Dorsolateral prefrontal cortex (tissue), 120 donors: ENCODE measurements at regions of chr16 and their contacts with region 1.

Region 1: DNA sequence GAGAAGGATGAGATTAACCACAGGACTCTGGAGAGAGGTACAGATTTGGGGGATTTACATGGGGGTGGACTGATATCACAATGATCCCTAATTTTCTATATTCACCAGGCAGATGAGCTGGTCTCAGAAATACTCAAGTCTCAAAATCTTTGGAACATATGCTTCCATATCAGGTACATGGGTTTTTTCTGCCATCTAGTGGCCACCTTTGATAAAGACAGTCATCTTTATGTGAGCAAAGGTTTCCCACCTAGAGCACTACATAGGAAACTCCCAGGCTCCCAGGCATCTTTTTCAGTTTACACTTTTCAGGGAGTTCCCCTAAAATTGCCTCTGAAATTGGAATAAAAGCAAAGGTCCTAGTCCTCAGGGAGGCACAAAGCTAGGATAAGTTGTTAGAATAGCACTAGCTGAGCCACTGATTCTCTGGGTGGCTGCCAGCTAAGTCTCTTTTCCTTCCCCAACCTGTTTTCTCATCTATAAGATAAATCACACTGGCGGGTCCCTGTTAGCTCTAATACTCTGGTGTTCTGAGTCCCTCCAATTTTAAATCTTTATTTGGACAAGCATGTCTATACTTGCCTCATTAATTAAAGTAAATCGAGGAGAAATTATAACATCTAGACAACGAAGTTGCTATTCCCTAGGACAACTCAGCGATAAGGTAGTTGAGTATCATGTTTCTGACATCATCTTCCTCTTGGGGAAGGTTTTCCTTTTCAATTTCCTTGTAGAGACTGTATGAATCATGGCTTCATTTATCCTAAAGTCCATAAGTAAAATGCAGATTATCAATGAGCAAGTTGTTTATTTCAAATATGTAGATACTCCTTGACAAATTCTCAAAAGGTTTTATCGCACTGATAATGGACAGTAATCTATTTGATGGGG is 19.0 kb upstream of the MON1B start:
- DNase-seq: peak in 1 of 10 donors; percentile 46
- H3K4me3 ChIP-seq: no peak overlapping the region
- H3K27ac ChIP-seq: no peak overlapping the region
- H3K27me3 ChIP-seq: peaks cover 0 to 13% (median 0%) of the 10 kb centered on the region in 45 donors
- CTCF ChIP-seq: peak; percentile 66 to 93 (median 82)

Region 2: GRCh38 chr16:75789237-75789636 is 1382.8 kb before region 1 on chr16:
- intact Hi-C with region 1: loop called (anchors 2 to 5 kb)
- DNase-seq: no peak
- H3K4me3 ChIP-seq: peak overlapping the region in 2 of 59 donors; percentile 2 to 20
- H3K27ac ChIP-seq: peak overlapping the region in 1 of 59 donors; percentile 21
- H3K27me3 ChIP-seq: peaks cover 0 to 4% (median 0%) of the 10 kb centered on the region in 45 donors
- CTCF ChIP-seq: peak; percentile 82 to 98 (median 94)

Region 3: DNA sequence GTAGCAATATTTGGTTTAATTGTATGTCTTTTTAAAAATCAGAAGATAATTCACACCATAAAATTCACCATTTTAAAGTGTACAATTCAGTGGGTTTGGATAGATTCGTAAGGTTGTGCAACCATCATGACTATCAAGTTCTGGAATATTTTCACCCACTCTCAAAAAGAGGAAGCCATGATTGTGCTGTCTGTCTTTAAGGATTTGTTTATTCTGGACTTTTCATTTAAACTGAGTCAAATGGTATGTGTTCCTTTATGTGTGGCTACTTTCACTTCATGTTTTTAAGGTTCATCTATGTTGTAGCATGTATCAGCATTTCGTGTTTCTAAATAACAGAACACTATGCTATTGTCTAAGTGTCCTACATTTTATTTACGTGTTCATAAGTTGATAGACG is 1377.6 kb before region 1 on chr16:
- intact Hi-C with region 1: loop called (anchors 2 to 5 kb)
- DNase-seq: no peak
- H3K4me3 ChIP-seq: no peak overlapping the region
- H3K27ac ChIP-seq: no peak overlapping the region
- H3K27me3 ChIP-seq: no peaks in the 10 kb centered on the region
- CTCF ChIP-seq: no peak